ENCODE measurements at regions of chr2 and their contacts with region 1.

Region 1: DNA sequence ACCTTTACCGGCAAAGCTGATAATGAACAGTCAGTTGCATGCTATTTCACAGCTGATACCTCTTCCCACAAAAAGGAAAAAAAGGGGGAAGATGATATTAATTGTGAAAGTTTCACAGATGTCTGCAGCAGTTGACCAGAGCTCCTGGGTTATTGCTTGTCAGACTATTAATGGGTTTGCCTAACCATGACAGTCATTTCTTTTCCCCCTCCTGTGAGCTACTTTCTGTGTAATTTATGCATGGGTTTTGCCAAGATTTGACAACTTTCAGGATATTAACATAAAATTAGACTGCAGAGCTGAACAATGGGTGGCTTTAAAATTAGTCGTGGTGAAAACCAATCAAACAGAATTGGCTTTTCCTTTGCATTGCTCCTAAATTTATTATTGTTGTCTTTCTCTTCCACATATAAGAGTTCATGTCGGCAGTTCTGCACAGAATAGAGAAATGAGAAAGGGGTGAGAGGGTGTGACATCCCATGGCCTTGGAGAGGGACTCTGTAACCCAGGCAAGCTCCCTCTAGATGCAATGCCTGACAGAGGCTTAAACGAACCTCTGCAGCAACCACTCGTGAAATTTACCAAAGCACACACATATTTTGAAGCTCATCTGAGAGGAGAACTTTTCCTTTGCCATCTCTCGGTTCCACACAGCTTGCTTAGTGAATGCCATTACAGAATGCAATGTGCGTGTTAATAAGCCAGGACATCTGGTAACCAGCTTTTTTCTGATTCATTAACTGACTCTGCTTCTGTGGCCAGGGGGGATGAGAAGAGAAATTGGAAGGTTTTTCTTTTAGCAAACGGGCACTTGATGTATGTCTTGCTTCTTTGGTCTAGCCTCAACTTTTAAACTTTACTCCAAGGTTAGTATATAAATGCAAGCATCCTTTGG is 82.2 kb upstream of the ITGA4 start:
- DNase-seq: no peak
- ATAC-seq: peak; percentile 72
- H3K4me3 Mint-ChIP-seq: no peak overlapping the region
- H3K27ac Mint-ChIP-seq: no peak overlapping the region
- H3K4me1 Mint-ChIP-seq: peaks cover 49% of the 10 kb centered on the region
- H3K27me3 Mint-ChIP-seq: no peaks in the 10 kb centered on the region
- CTCF ChIP-seq: no peak

Region 2: DNA sequence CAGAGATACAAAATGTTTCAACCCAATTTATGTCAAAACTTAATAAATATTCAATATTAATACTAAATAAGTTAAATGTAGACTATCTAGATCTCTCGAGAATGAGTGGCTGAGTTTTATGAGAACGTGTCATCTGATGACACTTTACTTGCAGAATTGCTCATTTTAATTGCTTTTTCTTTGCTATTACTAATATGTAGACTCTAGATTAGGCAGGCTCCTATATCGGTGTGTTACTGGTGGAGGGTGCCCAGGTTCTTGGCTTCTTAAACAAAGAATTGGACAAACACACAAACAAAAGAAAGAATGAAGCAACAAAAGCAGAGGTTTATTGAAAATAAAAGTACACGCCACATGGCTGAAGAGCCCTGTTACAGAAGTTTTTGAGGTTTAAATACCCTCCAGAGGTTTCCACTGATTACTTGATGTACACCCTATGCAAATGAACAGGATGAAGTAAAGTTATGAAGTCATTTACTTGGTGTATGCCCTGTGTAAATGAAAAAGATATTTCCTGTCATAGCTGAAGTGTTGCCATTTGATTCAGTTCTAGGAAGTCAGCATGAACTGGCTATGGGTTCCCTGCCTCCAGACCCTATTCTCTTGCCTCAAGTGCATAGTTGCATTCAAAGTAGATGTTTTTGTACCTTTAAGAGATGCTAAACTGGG is 40.7 kb before region 1 on chr2:
- CTCF ChIA-PET with region 1: no interaction called
- POLR2A ChIA-PET with region 1: no interaction called
- intact Hi-C with region 1: loop called (anchors 5 kb)
- DNase-seq: no peak
- ATAC-seq: peak; percentile 61
- H3K4me3 Mint-ChIP-seq: no peak overlapping the region
- H3K27ac Mint-ChIP-seq: peak overlapping the region; percentile 25
- H3K4me1 Mint-ChIP-seq: peaks cover 10% of the 10 kb centered on the region
- H3K27me3 Mint-ChIP-seq: no peaks in the 10 kb centered on the region
- CTCF ChIP-seq: no peak

Region 3: GRCh38 chr2:181363164-181363563 is 11.9 kb before region 1 on chr2:
- CTCF ChIA-PET with region 1: no interaction called
- POLR2A ChIA-PET with region 1: no interaction called
- intact Hi-C with region 1: loop called (anchors 2 kb)
- DNase-seq: no peak
- ATAC-seq: peak; percentile 10
- H3K4me3 Mint-ChIP-seq: no peak overlapping the region
- H3K27ac Mint-ChIP-seq: no peak overlapping the region
- H3K4me1 Mint-ChIP-seq: peaks cover 14% of the 10 kb centered on the region
- H3K27me3 Mint-ChIP-seq: no peaks in the 10 kb centered on the region
- CTCF ChIP-seq: no peak

Measured in activated B cell treated with CpG ODN at 0.5 μM for 24 hours (primary cell).